Lower leg skin (tissue), 4 donors: ENCODE measurements at regions of chr3 and their contacts with region 1.

Region 1: GRCh38 chr3:106792716-106793115 is 584.5 kb upstream of the CCDC54 start:
- DNase-seq: no peak
- H3K4me3 ChIP-seq: no peak overlapping the region
- CTCF ChIP-seq: no peak
- POLR2A ChIP-seq: no peak

Region 2: GRCh38 chr3:106877627-106878026 is 84.9 kb after region 1 on chr3:
- intact Hi-C with region 1: loop called (anchors 5 kb)
- DNase-seq: no peak
- H3K4me3 ChIP-seq: no peak overlapping the region
- CTCF ChIP-seq: no peak
- POLR2A ChIP-seq: no peak

Region 3: DNA sequence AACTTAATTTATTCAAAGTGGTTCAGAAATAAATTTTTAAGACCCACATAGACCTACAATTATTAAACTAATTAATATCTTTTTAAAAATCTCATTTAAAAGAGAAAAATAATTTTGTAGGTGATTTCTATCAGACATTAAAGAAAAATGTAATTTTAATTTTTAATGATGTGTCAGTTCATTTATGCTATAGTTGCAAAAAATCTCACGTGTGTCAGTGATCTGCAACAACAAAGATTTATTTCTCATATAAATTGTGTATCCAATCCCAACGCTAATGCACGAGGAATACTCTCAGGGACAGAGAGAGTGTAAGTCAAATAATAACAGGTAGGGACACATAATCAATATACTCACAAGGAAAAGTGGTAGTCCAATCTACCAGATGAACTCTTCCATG is 127.9 kb after region 1 on chr3:
- intact Hi-C with region 1: no loop called
- DNase-seq: no peak
- H3K4me3 ChIP-seq: no peak overlapping the region
- CTCF ChIP-seq: no peak
- POLR2A ChIP-seq: no peak

Region 4: DNA sequence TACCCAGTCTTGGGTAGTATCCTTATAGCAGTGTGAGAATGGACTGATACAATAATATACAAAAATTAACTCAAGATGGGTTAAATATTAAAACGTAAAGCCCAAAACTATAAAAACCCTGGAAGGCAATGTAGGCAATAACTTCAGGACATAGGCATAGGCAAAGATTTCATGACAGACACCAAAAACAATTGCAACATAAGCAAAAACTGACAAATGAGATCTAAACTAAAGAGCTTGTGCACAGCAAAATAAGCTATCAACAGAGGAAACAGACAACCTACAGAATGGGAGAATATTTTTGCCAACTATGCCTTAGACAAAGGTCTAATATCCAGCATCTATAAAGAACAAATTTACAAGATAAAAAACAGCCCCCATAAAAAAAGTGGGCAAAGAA is 379.7 kb after region 1 on chr3:
- intact Hi-C with region 1: no loop called
- DNase-seq: no peak
- H3K4me3 ChIP-seq: no peak overlapping the region
- CTCF ChIP-seq: no peak
- POLR2A ChIP-seq: no peak